CD4-positive, alpha-beta T cell (primary cell): ENCODE measurements at regions of chr11 and their contacts with region 1.

Region 1: DNA sequence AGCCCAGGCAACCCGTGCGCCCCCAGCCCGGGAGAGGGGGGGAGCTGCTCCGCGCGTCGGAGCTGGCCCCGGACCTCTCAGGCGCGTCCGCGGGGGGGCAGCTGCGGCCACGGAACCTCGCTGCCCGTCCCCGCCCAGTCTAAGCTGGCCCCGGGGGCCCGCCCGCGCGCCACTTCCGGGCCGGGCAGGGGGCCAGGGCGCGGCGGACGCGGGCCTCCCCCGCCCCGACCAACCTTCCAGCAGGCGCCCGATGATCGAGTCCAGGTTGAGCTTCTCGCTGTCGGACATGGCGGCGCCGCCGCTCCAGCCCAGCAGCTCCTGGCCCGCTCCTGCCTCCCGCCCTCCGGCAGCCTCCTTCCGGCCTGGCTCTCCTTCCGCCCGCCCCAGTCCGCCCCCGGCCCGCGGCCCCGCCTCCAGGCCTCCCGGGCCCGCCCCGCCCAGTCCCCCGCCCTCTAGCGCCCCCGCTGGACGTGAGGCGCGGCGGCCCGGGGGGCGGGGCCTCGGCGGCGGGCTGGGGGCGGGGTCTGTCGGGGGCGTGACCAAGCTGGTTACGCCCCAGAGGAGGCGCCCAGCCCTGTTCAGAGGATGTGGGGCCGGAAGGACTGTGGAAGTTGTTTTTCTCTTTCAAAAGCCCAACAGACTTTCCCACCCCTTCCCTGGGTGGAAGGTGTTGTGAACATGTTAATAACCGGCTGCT is at the start of gene PPP1CA:
- DNase-seq: peak; percentile 83 to 96 (median 92)
- ATAC-seq: peak; percentile 69
- H3K4me3 ChIP-seq: peak within 1 kb of the TSS; percentile 98
- H3K4me3 Mint-ChIP-seq: peak within 1 kb of the TSS; percentile 100
- H3K27ac ChIP-seq: peak within 1 kb of the TSS; percentile 62 to 84
- H3K27ac Mint-ChIP-seq: peak within 1 kb of the TSS; percentile 98
- H3K4me1 ChIP-seq: peaks cover 86% of the 10 kb centered on the region
- H3K4me1 Mint-ChIP-seq: peaks cover 56% of the 10 kb centered on the region
- H3K27me3 ChIP-seq: peaks cover 0 to 3% of the 10 kb centered on the region in 2 experiments
- H3K27me3 Mint-ChIP-seq: no peaks in the 10 kb centered on the region
- CTCF ChIP-seq: no peak
- total RNA-seq, gene PPP1CA: 42.0 to 45.5 TPM

Region 2: DNA sequence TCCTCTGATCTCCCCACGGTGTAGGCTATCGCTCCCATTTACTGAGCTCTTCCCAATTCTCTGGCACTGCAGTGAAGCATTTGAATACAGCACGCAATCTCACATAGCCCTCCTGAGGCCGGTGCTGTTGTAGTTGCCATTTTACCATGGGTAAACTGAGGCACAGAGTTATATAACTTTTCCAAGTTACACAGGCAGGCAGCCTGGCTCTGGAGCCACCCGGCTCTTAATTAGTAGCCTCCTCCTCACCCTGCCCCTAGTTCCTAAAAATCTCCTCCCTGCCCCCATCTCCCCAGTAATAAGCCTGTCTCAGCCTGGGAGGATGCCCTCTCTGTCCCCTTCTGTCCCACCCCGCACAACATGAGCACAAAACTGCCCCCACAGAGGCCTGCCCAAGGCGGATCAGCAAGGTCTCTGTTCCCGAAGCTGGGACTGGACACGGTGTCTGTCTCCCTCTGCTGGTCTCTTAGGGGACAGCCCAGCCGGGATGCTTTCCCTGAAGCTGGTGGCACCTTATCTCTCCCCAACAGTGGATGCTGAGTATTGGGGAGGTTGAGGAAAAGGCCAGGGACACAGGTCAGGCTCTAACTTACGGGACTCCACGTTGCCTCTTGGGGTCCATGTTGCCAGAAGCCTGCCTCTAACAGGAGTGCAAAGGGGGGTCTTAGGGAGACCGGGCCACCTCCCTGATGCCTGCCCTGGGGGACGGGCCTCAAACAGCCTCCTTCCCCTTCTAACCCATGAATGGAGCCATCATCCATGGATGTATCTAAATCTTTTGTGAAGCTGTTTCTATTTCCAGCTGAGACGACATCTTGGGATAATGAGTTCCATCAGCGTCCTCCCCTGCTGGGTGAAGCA is 19.1 kb before region 1 on chr11:
- CTCF ChIA-PET with region 1: interaction called, 11 read pairs
- POLR2A ChIA-PET with region 1: interaction called, 5 read pairs
- intact Hi-C with region 1: no loop called
- DNase-seq: peak; percentile 72 to 90 (median 82)
- ATAC-seq: peak; percentile 99
- H3K4me3 ChIP-seq: no peak overlapping the region
- H3K4me3 Mint-ChIP-seq: no peak overlapping the region
- H3K27ac ChIP-seq: no peak overlapping the region
- H3K27ac Mint-ChIP-seq: no peak overlapping the region
- H3K4me1 ChIP-seq: peaks cover 15% of the 10 kb centered on the region
- H3K4me1 Mint-ChIP-seq: peaks cover 5% of the 10 kb centered on the region
- H3K27me3 ChIP-seq: no peaks in the 10 kb centered on the region
- H3K27me3 Mint-ChIP-seq: peaks cover 4% of the 10 kb centered on the region
- CTCF ChIP-seq: peak; percentile 92

Region 3: DNA sequence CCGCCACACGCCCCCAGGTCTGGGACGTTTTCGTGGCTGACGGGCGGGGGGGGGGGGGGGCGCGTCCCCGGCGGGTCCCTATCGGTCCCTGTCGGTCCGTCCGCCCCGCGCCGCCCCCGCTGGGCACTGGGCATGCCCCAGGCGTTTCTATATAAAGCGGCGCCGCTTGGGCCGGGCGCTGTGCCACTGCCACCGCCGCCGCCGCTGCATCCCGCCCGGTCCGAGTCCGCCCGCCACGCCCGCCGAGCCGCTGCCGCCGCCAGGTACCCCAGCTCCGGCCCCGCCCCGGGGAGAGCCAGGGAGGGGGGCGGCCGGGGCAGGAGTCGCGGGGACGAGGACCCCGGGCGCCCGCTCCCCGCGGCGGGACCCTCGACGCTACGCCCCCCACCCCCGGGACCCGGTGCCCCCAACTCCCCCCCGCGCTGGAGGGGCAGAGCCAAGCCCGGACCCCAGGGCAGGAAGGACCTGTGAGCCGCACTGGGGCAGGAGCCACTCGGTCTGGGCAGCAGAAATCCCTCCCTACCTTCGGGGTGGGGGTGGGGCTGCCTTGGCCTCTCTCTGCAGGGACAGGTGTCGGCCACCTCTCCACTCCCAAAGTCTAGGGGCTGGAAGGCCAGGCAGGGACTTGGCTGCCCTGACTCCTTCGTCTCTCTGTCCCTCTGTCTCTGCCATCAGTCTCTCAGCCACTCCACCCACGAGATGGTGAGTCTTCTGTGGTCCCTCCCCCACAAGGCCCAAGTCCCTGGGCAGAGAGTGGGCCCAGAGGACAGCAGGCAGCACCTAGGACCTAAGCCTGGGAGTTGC is 14.1 kb after region 1 on chr11 and contains the start of gene CARNS1:
- CTCF ChIA-PET with region 1: interaction called, 46 read pairs
- POLR2A ChIA-PET with region 1: interaction called, 273 read pairs
- intact Hi-C with region 1: loop called (anchors 1 to 2 kb)
- DNase-seq: peak in 3 of 14 experiments; percentile 38 to 46 (median 44)
- ATAC-seq: no peak
- H3K4me3 ChIP-seq: peak within 1 kb of the TSS; percentile 51
- H3K4me3 Mint-ChIP-seq: peak within 1 kb of the TSS; percentile 93
- H3K27ac ChIP-seq: peak within 1 kb of the TSS; percentile 78 to 79
- H3K27ac Mint-ChIP-seq: peak within 1 kb of the TSS; percentile 98
- H3K4me1 ChIP-seq: peaks cover 95% of the 10 kb centered on the region
- H3K4me1 Mint-ChIP-seq: peaks cover 79% of the 10 kb centered on the region
- H3K27me3 ChIP-seq: no peaks in the 10 kb centered on the region
- H3K27me3 Mint-ChIP-seq: no peaks in the 10 kb centered on the region
- CTCF ChIP-seq: no peak
- total RNA-seq, gene CARNS1: 9.9 to 10.0 TPM

Region 4: GRCh38 chr11:67428052-67428914 is 26.6 kb after region 1 on chr11 and contains the start of gene RPS6KB2:
- CTCF ChIA-PET with region 1: interaction called, 3 read pairs
- POLR2A ChIA-PET with region 1: interaction called, 353 read pairs
- intact Hi-C with region 1: loop called in 1 of 2 experiments (anchors 2 kb)
- DNase-seq: peak; percentile 96 to 100 (median 99)
- ATAC-seq: peak; percentile 84
- H3K4me3 ChIP-seq: peak within 1 kb of the TSS; percentile 92
- H3K4me3 Mint-ChIP-seq: peak within 1 kb of the TSS; percentile 98
- H3K27ac ChIP-seq: peak within 1 kb of the TSS; percentile 85 to 86
- H3K27ac Mint-ChIP-seq: peak within 1 kb of the TSS; percentile 96
- H3K4me1 ChIP-seq: peaks cover 59% of the 10 kb centered on the region
- H3K4me1 Mint-ChIP-seq: peaks cover 33% of the 10 kb centered on the region
- H3K27me3 ChIP-seq: no peaks in the 10 kb centered on the region
- H3K27me3 Mint-ChIP-seq: no peaks in the 10 kb centered on the region
- CTCF ChIP-seq: no peak
- total RNA-seq, gene RPS6KB2: 69.3 to 72.0 TPM

Region 5: DNA sequence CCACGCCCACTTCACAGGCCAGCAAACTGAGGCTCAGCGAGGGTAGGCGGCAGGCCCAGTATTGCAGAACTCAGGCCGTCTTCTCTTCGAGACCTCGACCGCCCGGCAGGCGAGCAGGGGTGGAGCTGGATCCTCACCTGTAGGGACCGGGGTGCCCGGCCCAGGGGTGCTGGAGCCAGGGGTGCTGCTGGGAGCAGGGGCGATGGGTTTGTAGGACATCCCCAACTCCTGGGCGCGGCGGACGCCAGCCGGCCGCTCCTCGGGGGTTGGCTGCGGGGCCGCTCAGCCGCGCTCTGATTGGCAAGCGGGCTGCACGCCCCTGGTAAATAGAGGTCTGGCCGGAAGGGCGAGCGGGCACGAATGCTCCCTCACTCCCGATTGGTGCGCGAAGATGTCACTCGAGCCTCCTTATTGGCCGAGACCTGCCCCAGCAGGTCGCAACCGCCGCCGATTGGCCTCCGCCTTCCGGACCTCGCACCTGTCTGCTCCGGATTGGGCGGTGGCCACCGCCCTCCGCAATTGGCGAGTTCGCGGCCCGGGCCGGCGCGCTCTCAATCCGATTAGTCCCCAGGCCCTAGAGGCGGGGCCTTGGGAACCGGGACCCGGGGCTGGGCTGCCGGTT is 106.3 kb after region 1 on chr11 and contains the start of gene CDK2AP2:
- CTCF ChIA-PET with region 1: interaction called, 3 read pairs
- POLR2A ChIA-PET with region 1: interaction called, 21 read pairs
- intact Hi-C with region 1: loop called (anchors 2 to 5 kb)
- DNase-seq: peak; percentile 91 to 99 (median 97)
- ATAC-seq: peak; percentile 71
- H3K4me3 ChIP-seq: peak within 1 kb of the TSS; percentile 76
- H3K4me3 Mint-ChIP-seq: peak within 1 kb of the TSS; percentile 93
- H3K27ac ChIP-seq: peak within 1 kb of the TSS; percentile 87 to 97
- H3K27ac Mint-ChIP-seq: peak within 1 kb of the TSS; percentile 98
- H3K4me1 ChIP-seq: peaks cover 50% of the 10 kb centered on the region
- H3K4me1 Mint-ChIP-seq: peaks cover 44% of the 10 kb centered on the region
- H3K27me3 ChIP-seq: peaks cover 0 to 9% of the 10 kb centered on the region in 2 experiments
- H3K27me3 Mint-ChIP-seq: no peaks in the 10 kb centered on the region
- CTCF ChIP-seq: no peak
- total RNA-seq, gene CDK2AP2: 19.5 to 22.0 TPM

Region 6: DNA sequence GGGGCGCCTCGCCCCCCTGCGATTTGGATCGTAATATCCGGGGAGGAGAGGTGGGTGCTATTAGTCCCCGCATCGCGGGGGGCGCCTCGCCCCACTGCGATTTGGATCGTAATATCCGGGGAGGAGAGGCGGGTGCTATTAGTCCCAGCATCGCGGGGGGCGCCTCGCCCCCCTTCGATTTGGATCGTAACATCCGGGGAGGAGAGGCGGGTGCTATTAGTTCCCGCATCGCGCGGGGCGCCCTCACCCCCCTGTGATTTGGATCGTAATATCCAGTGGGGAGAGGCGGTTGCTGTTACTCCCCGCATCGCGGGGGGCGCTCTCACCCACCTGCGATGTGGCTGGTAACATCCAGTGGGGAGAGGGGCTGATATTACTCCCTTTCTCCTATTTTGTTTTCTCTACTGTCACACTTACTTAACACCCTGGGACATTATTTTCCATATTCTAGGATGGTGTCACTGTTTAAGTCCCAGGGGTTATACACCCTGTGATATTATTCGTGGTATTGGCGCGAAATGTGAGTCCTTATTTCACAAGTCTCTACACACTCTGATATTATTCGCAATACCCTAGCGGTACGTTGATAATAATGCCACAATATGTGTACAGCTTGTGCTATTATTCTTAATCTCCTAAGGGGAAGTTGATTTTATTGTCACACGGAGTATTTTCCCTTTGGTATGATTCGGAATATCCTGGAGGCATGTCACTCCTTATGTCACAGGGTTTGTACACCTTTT is 330.6 kb after region 1 on chr11:
- CTCF ChIA-PET with region 1: no interaction called
- POLR2A ChIA-PET with region 1: no interaction called
- intact Hi-C with region 1: no loop called
- DNase-seq: peak; percentile 3 to 84 (median 44)
- ATAC-seq: peak; percentile 99
- H3K4me3 ChIP-seq: peak overlapping the region; percentile 50
- H3K4me3 Mint-ChIP-seq: peak overlapping the region; percentile 57
- H3K27ac ChIP-seq: no peak overlapping the region
- H3K27ac Mint-ChIP-seq: no peak overlapping the region
- H3K4me1 ChIP-seq: peaks cover 7% of the 10 kb centered on the region
- H3K4me1 Mint-ChIP-seq: peaks cover 6% of the 10 kb centered on the region
- H3K27me3 ChIP-seq: peaks cover 0 to 11% of the 10 kb centered on the region in 2 experiments
- H3K27me3 Mint-ChIP-seq: peaks cover 45% of the 10 kb centered on the region
- CTCF ChIP-seq: peak; percentile 44